Dendritic cell treated with granulocyte-macrophage colony-stimulating factor and Interleukin-4, amounts not matched to agents 40 ng/mL and 50 ng/mL, for 4 days (primary cell): ENCODE measurements at regions of chr2 and their contacts with region 1.

Region 1: DNA sequence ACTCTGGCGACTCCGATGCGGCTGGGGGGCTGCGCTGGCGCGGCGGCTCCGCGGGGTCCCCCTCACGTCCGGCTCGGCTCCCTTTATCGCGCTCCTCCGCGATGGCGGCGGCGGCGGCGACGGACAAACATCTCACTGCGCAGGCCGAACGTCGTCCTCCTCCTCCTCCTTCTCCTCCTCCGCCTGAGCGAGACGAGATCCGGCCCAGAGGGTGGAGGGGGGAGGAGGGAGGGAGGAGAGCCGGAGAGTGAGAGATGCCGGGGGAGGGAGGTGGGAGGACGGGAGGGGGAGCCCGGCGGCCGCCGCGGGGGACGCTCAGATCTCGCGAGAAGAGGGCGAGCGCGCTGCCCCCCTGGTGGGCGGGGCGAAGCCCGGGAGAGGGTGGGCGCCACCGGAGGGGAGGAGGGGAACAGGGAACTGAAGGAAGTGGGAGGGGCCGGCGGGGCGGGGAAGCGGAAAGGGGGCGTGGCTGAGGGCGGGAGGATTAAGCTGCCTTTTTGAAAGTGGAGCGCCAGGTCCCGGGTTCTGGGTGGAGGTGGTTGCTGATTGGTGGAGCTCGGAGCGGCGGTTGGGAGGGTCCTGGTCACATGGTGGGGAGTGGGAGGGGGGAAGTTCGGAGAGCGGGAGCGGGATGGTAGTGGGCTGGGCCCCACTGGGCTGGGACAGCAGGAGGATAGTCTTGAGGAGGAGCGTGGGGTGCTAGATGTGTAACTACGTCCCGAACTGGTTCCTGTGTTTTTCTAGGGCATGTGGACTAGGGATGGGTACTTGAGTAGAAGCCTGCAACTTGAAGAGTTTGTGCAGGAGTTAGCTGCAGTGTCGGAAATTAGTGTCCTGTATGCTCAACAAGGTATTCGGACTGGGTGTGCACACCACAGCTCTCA is at the start of gene CUL3:
- H3K4me3 Mint-ChIP-seq: peak within 1 kb of the TSS; percentile 98
- H3K27ac Mint-ChIP-seq: peak within 1 kb of the TSS; percentile 89
- H3K4me1 Mint-ChIP-seq: peaks cover 17% of the 10 kb centered on the region
- H3K27me3 Mint-ChIP-seq: no peaks in the 10 kb centered on the region

Region 2: GRCh38 chr2:223957092-223957851 is 628.2 kb before region 1 on chr2 and contains the start of gene MRPL44:
- intact Hi-C with region 1: loop called (anchors 10 kb)
- H3K4me3 Mint-ChIP-seq: peak within 1 kb of the TSS; percentile 95
- H3K27ac Mint-ChIP-seq: peak within 1 kb of the TSS; percentile 99
- H3K4me1 Mint-ChIP-seq: peaks cover 36% of the 10 kb centered on the region
- H3K27me3 Mint-ChIP-seq: no peaks in the 10 kb centered on the region

Region 3: GRCh38 chr2:224025874-224026273 is 559.6 kb before region 1 on chr2:
- intact Hi-C with region 1: loop called (anchors 5 kb)
- H3K4me3 Mint-ChIP-seq: peak overlapping the region; percentile 10
- H3K27ac Mint-ChIP-seq: peak overlapping the region; percentile 69
- H3K4me1 Mint-ChIP-seq: peaks cover 28% of the 10 kb centered on the region
- H3K27me3 Mint-ChIP-seq: peaks cover 3% of the 10 kb centered on the region

Region 4: DNA sequence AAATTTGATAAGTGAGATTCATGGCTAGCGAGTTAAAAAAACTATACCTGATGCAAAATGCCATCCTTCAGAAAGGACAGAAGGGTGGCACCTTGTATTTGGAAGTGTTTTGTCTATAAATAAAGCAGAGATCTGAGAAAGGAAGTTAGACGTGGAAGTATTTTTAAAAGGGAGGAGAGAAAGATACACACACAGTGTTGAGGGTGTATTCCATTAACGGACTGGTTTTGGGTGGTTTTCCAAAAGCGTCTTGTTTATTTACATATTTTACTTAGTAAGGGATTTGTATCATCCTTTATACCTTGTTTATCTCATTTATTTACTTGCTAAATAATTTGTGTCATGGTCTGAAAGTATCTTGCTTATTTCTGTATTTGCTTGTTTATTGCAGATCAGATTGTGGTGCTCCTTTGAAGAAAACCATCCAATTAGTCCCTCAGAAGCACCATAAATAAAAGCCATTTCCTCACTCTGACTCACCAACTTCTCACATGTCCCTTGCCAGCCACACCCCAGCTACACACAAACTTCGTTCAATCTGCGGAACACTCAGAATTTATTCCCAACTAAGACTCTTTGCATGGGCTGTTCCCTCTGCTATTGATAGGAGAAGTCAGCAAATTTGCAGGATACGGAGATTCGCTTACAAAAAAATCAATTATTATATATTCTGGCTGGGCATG is 274.4 kb before region 1 on chr2:
- intact Hi-C with region 1: no loop called
- H3K4me3 Mint-ChIP-seq: no peak overlapping the region
- H3K27ac Mint-ChIP-seq: no peak overlapping the region
- H3K4me1 Mint-ChIP-seq: peaks cover 19% of the 10 kb centered on the region
- H3K27me3 Mint-ChIP-seq: peaks cover 3% of the 10 kb centered on the region

Region 5: DNA sequence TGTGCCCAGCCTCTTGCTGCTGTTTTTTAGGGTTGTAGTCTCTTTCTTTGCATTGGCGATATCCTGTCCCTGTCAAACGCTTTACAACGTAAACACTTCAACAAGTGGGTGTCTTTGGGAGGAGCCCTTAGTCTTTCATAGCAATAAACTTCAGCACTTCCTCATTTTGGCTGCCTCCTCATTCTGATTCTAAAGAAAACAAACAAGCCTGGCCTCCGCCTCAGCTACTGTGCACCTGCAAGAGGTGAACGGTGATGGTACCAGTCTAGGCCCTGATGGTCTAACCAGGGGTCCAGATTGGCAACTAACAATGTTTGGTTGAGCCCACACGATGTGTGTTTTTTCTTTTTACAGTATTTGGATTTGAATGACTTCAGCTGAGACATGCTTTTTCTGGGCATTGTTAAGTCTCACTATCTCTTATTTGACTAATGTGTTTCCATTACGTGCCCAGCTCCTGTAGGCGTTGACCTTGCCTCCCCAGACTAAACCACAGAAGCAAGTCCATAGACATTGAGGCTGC is 52.9 kb after region 1 on chr2:
- intact Hi-C with region 1: loop called (anchors 2 kb)
- H3K4me3 Mint-ChIP-seq: peak overlapping the region; percentile 10
- H3K27ac Mint-ChIP-seq: peak overlapping the region; percentile 47
- H3K4me1 Mint-ChIP-seq: peaks cover 13% of the 10 kb centered on the region
- H3K27me3 Mint-ChIP-seq: peaks cover 1% of the 10 kb centered on the region

Region 6: GRCh38 chr2:225076125-225076524 is 490.7 kb after region 1 on chr2:
- intact Hi-C with region 1: no loop called
- H3K4me3 Mint-ChIP-seq: no peak overlapping the region
- H3K27ac Mint-ChIP-seq: no peak overlapping the region
- H3K4me1 Mint-ChIP-seq: peaks cover 26% of the 10 kb centered on the region
- H3K27me3 Mint-ChIP-seq: peaks cover 3% of the 10 kb centered on the region